ENCODE measurements at regions of chr9 and their contacts with region 1.

Region 1: GRCh38 chr9:3240656-3241268 is 285.0 kb downstream of the RFX3 start:
- DNase-seq: no peak
- H3K4me3 ChIP-seq: no peak overlapping the region
- H3K27ac ChIP-seq: no peak overlapping the region
- H3K4me1 ChIP-seq: no peaks in the 10 kb centered on the region
- H3K27me3 ChIP-seq: no peaks in the 10 kb centered on the region
- CTCF ChIP-seq: peak; percentile 87 to 98 (median 89)

Region 2: GRCh38 chr9:3441197-3441816 is 200.5 kb after region 1 on chr9:
- dilution Hi-C with region 1: loop called (anchors 25 kb)
- DNase-seq: no peak
- H3K4me3 ChIP-seq: no peak overlapping the region
- H3K27ac ChIP-seq: no peak overlapping the region
- H3K4me1 ChIP-seq: no peaks in the 10 kb centered on the region
- H3K27me3 ChIP-seq: no peaks in the 10 kb centered on the region
- CTCF ChIP-seq: peak; percentile 50 to 70 (median 64)